PC-9 (cell line): ENCODE measurements at regions of chr4 and their contacts with region 1.

Region 1: GRCh38 chr4:164768516-164768915 is 14.6 kb downstream of the SMIM31 start:
- DNase-seq: no peak
- H3K4me3 ChIP-seq: no peak overlapping the region
- H3K27ac ChIP-seq: no peak overlapping the region
- H3K4me1 ChIP-seq: no peaks in the 10 kb centered on the region
- H3K27me3 ChIP-seq: no peaks in the 10 kb centered on the region
- CTCF ChIP-seq: peak; percentile 51; the same call in 1 of the 2 replicates

Region 2: GRCh38 chr4:164888096-164888715 is 119.7 kb after region 1 on chr4:
- CTCF ChIA-PET with region 1: interaction called, 12 read pairs
- POLR2A ChIA-PET with region 1: no interaction called
- intact Hi-C with region 1: no loop called
- DNase-seq: no peak
- H3K4me3 ChIP-seq: no peak overlapping the region
- H3K27ac ChIP-seq: no peak overlapping the region
- H3K4me1 ChIP-seq: no peaks in the 10 kb centered on the region
- H3K27me3 ChIP-seq: no peaks in the 10 kb centered on the region
- CTCF ChIP-seq: no peak

Region 3: GRCh38 chr4:164997324-164997723 is 228.8 kb after region 1 on chr4:
- CTCF ChIA-PET with region 1: no interaction called
- POLR2A ChIA-PET with region 1: no interaction called
- intact Hi-C with region 1: loop called (anchors 5 kb)
- DNase-seq: no peak
- H3K4me3 ChIP-seq: no peak overlapping the region
- H3K27ac ChIP-seq: no peak overlapping the region
- H3K4me1 ChIP-seq: no peaks in the 10 kb centered on the region
- H3K27me3 ChIP-seq: peaks cover 7% of the 10 kb centered on the region; the same call in 1 of the 2 replicates
- CTCF ChIP-seq: peak; percentile 41; the same call in 1 of the 2 replicates

Region 4: DNA sequence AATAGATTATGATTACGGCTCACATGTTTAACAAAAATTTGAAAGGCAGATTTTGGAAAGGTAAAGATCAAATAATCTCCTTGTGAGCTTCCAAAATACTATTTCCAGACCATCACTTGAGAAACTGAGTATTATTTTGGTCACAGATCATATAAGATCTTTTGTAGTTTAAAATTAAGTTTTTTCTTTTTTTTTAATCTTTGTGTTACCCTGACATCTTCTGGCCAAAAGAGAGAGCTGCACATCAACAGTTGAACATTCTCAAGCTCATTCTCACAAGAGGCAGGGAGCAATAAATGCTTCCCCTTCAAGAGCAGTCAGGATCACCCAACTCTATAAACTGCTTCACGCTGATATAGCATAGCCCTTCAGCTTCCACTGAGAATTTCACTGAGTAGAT is 328.3 kb after region 1 on chr4:
- CTCF ChIA-PET with region 1: interaction called, 10 read pairs
- POLR2A ChIA-PET with region 1: no interaction called
- intact Hi-C with region 1: loop called (anchors 5 kb)
- DNase-seq: no peak
- H3K4me3 ChIP-seq: no peak overlapping the region
- H3K27ac ChIP-seq: no peak overlapping the region
- H3K4me1 ChIP-seq: no peaks in the 10 kb centered on the region
- H3K27me3 ChIP-seq: no peaks in the 10 kb centered on the region
- CTCF ChIP-seq: peak; percentile 64

Region 5: GRCh38 chr4:165502919-165503907 is 734.7 kb after region 1 on chr4:
- CTCF ChIA-PET with region 1: no interaction called
- POLR2A ChIA-PET with region 1: interaction called, 10 read pairs
- intact Hi-C with region 1: no loop called
- DNase-seq: no peak
- H3K4me3 ChIP-seq: no peak overlapping the region
- H3K27ac ChIP-seq: no peak overlapping the region
- H3K4me1 ChIP-seq: peaks cover 15% of the 10 kb centered on the region
- H3K27me3 ChIP-seq: no peaks in the 10 kb centered on the region
- CTCF ChIP-seq: no peak